SK-N-SH (cell line): ENCODE measurements at regions of chr2 and their contacts with region 1.

Region 1: DNA sequence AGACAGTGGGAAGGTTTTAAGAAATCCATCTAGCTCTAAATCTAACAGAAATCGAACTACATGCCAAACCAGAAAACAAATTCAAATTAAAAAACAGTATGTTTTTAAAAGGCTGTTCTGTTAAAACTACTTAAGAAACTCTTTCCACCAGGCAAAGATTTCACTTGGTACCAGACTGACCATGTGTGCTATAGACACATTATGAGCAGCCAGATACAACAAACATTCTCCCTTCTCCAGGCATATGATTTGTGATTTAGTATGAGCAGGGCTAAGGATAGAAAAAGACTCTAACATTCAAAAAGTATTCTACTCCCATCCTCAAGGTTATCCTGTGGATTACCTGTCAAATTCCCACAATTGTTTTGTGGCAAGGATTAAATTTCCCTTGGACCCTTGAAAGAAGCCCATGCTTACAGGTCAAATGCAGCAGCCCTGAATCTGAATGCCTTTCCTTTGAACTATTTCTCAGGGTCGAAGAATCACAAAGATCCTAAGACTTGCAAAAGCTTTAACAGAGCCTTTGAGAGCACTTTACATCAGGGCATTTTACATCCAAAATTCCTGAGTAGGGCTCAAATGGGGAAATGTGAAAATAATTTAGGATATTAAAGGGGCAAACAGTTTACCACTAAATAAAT is 42.5 kb upstream of the TTC32 start:
- DNase-seq: no peak
- H3K4me3 ChIP-seq: no peak overlapping the region
- H3K27ac ChIP-seq: no peak overlapping the region; a peak in 1 of 4 replicates
- H3K4me1 ChIP-seq: peaks cover 0 to 2% of the 10 kb centered on the region in 2 experiments; a peak in 1 of 4 replicates
- H3K27me3 ChIP-seq: no peaks in the 10 kb centered on the region
- CTCF ChIP-seq: no peak
- EP300 ChIP-seq: no peak
- RAD21 ChIP-seq: no peak

Region 2: GRCh38 chr2:18871430-18871829 is 1072.9 kb before region 1 on chr2:
- CTCF ChIA-PET with region 1: no interaction called
- POLR2A ChIA-PET with region 1: no interaction called
- DNase-seq: no peak
- H3K4me3 ChIP-seq: no peak overlapping the region
- H3K27ac ChIP-seq: no peak overlapping the region
- H3K4me1 ChIP-seq: no peaks in the 10 kb centered on the region
- H3K27me3 ChIP-seq: no peaks in the 10 kb centered on the region
- CTCF ChIP-seq: no peak
- EP300 ChIP-seq: no peak
- RAD21 ChIP-seq: no peak

Region 3: DNA sequence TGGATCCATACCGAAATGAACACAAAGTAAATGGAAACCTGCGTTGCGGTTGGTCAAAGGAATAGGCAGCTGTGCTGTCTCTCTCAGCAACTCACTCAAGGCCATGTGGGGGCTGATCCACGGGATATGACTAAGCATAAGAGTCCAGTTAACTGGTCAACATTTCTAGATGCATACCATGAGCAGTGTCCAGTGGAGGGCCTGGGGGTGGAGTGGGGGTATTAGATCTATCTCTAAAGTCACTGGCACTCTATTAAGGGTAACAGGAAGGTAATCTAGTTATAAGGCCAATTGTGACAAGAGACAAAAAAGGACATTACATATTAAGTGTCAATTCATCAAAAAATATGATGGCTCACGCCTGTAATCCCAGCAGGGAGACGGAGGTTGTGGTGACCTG is 179.3 kb before region 1 on chr2:
- CTCF ChIA-PET with region 1: no interaction called
- POLR2A ChIA-PET with region 1: no interaction called
- DNase-seq: no peak
- H3K4me3 ChIP-seq: no peak overlapping the region
- H3K27ac ChIP-seq: no peak overlapping the region
- H3K4me1 ChIP-seq: peaks cover 0 to 5% of the 10 kb centered on the region in 2 experiments; a peak in 1 of 4 replicates
- H3K27me3 ChIP-seq: no peaks in the 10 kb centered on the region
- CTCF ChIP-seq: no peak
- EP300 ChIP-seq: no peak
- RAD21 ChIP-seq: no peak

Region 4: GRCh38 chr2:19933351-19933981 is 10.9 kb before region 1 on chr2:
- CTCF ChIA-PET with region 1: interaction called, 10 read pairs
- POLR2A ChIA-PET with region 1: no interaction called
- DNase-seq: no peak
- H3K4me3 ChIP-seq: no peak overlapping the region
- H3K27ac ChIP-seq: peak overlapping the region; percentile 54 to 80
- H3K4me1 ChIP-seq: peaks cover 0 to 2% of the 10 kb centered on the region in 2 experiments; a peak in 2 of 4 replicates
- H3K27me3 ChIP-seq: no peaks in the 10 kb centered on the region
- CTCF ChIP-seq: no peak
- EP300 ChIP-seq: no peak; a peak in 1 of 4 replicates
- RAD21 ChIP-seq: no peak

Region 5: GRCh38 chr2:20273045-20273444 is 328.7 kb after region 1 on chr2:
- CTCF ChIA-PET with region 1: no interaction called
- POLR2A ChIA-PET with region 1: no interaction called
- DNase-seq: no peak
- H3K4me3 ChIP-seq: no peak overlapping the region
- H3K27ac ChIP-seq: 0 out of 4 replicates have a peak overlapping the region, but pooled peaks of 1 of the 2 experiments have one; percentile 22
- H3K4me1 ChIP-seq: no peaks in the 10 kb centered on the region; a peak in 2 of 4 replicates
- H3K27me3 ChIP-seq: no peaks in the 10 kb centered on the region
- CTCF ChIP-seq: no peak
- EP300 ChIP-seq: no peak
- RAD21 ChIP-seq: no peak